ENCODE measurements at regions of chrX and their contacts with region 1.

Region 1: DNA sequence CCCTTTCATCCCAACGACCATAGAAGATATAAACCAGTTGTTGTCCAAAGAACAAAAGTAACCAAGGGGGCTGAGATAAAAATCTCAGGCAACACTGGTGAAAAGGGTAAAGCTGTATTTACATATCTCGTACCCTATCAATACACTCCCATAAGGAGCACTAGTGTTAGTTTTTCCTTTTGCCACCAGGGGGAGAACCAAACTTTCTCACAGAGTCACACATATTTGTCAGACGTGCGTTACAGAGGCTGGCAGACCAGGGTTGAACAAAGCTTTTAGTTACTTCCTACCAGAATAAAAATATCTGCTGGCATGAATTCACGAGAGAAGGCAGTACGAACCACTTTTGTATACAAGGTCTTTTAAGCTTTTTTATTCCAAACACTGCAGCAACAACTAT is 88.3 kb downstream of the AMELX start:
- DNase-seq: peak; percentile 50
- H3K4me3 ChIP-seq: no peak overlapping the region
- H3K27ac ChIP-seq: peak overlapping the region in 1 of 2 donors; percentile 38
- H3K4me1 ChIP-seq: no peaks in the 10 kb centered on the region
- H3K27me3 ChIP-seq: no peaks in the 10 kb centered on the region
- CTCF ChIP-seq: peak; percentile 26 to 63 (median 48)
- POLR2A ChIP-seq: no peak

Region 2: GRCh38 chrX:11193035-11193469 is 188.4 kb before region 1 on chrX:
- intact Hi-C with region 1: no loop called
- DNase-seq: no peak
- H3K4me3 ChIP-seq: no peak overlapping the region
- H3K27ac ChIP-seq: no peak overlapping the region
- H3K4me1 ChIP-seq: no peaks in the 10 kb centered on the region
- H3K27me3 ChIP-seq: no peaks in the 10 kb centered on the region
- CTCF ChIP-seq: no peak
- POLR2A ChIP-seq: no peak

Region 3: GRCh38 chrX:11273544-11273943 is 107.9 kb before region 1 on chrX:
- intact Hi-C with region 1: no loop called
- DNase-seq: no peak
- H3K4me3 ChIP-seq: no peak overlapping the region
- H3K27ac ChIP-seq: no peak overlapping the region
- H3K4me1 ChIP-seq: no peaks in the 10 kb centered on the region
- H3K27me3 ChIP-seq: no peaks in the 10 kb centered on the region
- CTCF ChIP-seq: no peak
- POLR2A ChIP-seq: no peak

Region 4: GRCh38 chrX:11427453-11428071 is 46.1 kb after region 1 on chrX:
- intact Hi-C with region 1: loop called (anchors 5 kb)
- DNase-seq: peak; percentile 45
- H3K4me3 ChIP-seq: peak overlapping the region; percentile 42 to 56
- H3K27ac ChIP-seq: peak overlapping the region; percentile 84 to 85
- H3K4me1 ChIP-seq: no peaks in the 10 kb centered on the region
- H3K27me3 ChIP-seq: no peaks in the 10 kb centered on the region
- CTCF ChIP-seq: peak in 2 of 4 experiments; percentile 52 to 56
- POLR2A ChIP-seq: peak; percentile 22